Posterior vena cava (tissue), 2 donors: ENCODE measurements at regions of chr13 and their contacts with region 1.

Region 1: DNA sequence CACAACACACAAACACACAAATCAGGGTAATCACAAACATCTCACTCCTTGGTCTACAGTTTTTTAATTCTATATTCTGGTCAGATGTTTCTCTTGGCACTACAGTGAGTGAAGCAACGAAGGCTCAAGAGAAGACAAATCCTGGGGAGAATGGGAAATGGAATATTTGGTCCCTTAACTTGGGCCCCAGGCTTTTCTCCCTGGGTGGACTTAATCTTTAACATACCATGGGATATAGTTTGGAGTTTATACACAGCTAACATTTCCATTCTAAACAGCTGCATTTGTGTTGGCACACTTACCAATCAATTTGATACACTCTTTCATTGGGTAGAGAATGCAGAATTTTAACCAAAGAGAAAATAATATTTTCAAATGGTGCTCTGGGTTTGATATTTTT is 1132.6 kb upstream of the SLC10A2 start:
- DNase-seq: no peak

Region 2: GRCh38 chr13:102530751-102531150 is 1668.0 kb before region 1 on chr13:
- intact Hi-C with region 1: no loop called
- DNase-seq: no peak

Region 3: GRCh38 chr13:106083620-106084350 is 1885.0 kb after region 1 on chr13:
- intact Hi-C with region 1: loop called in 1 of 2 experiments (anchors 5 kb)
- DNase-seq: no peak